Activated T-helper 2 cell treated with anti-CD3 and anti-CD28 coated beads, Interferon-gamma antibody, Interleukin-2, Interleukin-4, amounts not matched to agents 10 μg/mL and 5 μg/mL and 100 μg/mL, durations not matched to agents 14 hours and 24 hours and 36 hours (primary cell): ENCODE measurements at regions of chr16 and their contacts with region 1.

Region 1: GRCh38 chr16:86285938-86286921 is 224.1 kb upstream of the FOXF1 start:
- DNase-seq: no peak
- H3K4me3 Mint-ChIP-seq: no peak overlapping the region
- H3K27ac Mint-ChIP-seq: no peak overlapping the region
- H3K4me1 Mint-ChIP-seq: no peaks in the 10 kb centered on the region
- H3K27me3 Mint-ChIP-seq: peaks cover 63% of the 10 kb centered on the region

Region 2: DNA sequence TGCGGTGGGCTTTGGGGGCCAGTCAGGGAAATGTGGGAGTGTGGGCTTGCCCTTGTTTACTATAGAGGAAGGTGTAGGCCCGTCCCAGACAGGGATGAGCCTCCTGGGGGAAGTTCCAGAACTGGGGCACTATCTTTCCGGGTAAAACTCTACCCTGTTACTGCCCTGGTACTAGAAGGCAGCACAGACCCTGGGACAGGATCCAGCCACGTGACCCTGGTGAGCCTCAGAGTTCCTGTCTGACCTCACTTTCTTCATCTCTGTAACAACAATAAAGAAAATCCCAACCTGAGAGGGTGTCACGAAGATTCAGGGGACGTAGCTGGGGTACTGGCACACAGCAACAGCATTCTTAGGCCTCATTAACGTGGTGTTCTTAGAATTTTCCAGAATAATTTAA is 15.5 kb before region 1 on chr16:
- intact Hi-C with region 1: no loop called
- DNase-seq: no peak
- H3K4me3 Mint-ChIP-seq: no peak overlapping the region
- H3K27ac Mint-ChIP-seq: no peak overlapping the region
- H3K4me1 Mint-ChIP-seq: no peaks in the 10 kb centered on the region
- H3K27me3 Mint-ChIP-seq: no peaks in the 10 kb centered on the region

Region 3: DNA sequence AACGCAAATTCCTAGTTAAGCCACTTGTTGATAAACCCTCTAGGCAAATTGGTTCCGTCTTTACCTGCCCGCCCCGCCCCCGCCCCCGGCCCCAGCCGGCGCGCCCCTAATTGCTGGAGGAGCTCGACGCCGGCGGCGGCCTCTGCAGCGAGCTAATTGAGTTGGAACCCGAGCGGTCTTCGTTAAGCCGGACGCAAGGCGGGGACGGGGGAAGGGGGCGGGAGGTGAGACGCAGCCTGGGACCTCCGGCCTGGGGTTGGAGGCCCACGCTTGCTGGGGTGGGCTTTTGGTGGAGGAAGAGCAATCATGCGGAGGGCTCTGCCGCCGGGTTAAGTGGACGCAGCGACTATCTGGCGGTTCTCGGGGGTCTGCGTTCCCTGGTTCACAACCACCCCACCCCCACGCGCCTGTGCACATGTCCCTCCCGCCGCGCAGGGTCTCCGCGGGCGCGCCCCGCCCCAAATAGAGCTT is 211.4 kb after region 1 on chr16:
- intact Hi-C with region 1: loop called (anchors 1 kb)
- DNase-seq: no peak
- H3K4me3 Mint-ChIP-seq: no peak overlapping the region
- H3K27ac Mint-ChIP-seq: no peak overlapping the region
- H3K4me1 Mint-ChIP-seq: no peaks in the 10 kb centered on the region
- H3K27me3 Mint-ChIP-seq: peaks cover 76% of the 10 kb centered on the region

Region 4: GRCh38 chr16:86509759-86510464 is 223.7 kb after region 1 on chr16:
- intact Hi-C with region 1: loop called (anchors 5 kb)
- DNase-seq: no peak
- H3K4me3 Mint-ChIP-seq: no peak overlapping the region
- H3K27ac Mint-ChIP-seq: no peak overlapping the region
- H3K4me1 Mint-ChIP-seq: peaks cover 16% of the 10 kb centered on the region
- H3K27me3 Mint-ChIP-seq: peaks cover 61% of the 10 kb centered on the region